ENCODE measurements at regions of chr22 and their contacts with region 1.

Region 1: GRCh38 chr22:17767233-17768065 is 6.8 kb downstream of the BID start:
- DNase-seq: peak; percentile 53
- H3K4me3 Mint-ChIP-seq: peak overlapping the region; percentile 44
- H3K27ac Mint-ChIP-seq: peak overlapping the region; percentile 74
- H3K4me1 Mint-ChIP-seq: peaks cover 42% of the 10 kb centered on the region
- H3K27me3 Mint-ChIP-seq: peaks cover 40% of the 10 kb centered on the region

Region 2: GRCh38 chr22:17734187-17734586 is 33.3 kb before region 1 on chr22:
- intact Hi-C with region 1: loop called (anchors 1 kb)
- DNase-seq: peak; percentile 16
- H3K4me3 Mint-ChIP-seq: no peak overlapping the region
- H3K27ac Mint-ChIP-seq: peak overlapping the region; percentile 67
- H3K4me1 Mint-ChIP-seq: peaks cover 17% of the 10 kb centered on the region
- H3K27me3 Mint-ChIP-seq: no peaks in the 10 kb centered on the region

Region 3: DNA sequence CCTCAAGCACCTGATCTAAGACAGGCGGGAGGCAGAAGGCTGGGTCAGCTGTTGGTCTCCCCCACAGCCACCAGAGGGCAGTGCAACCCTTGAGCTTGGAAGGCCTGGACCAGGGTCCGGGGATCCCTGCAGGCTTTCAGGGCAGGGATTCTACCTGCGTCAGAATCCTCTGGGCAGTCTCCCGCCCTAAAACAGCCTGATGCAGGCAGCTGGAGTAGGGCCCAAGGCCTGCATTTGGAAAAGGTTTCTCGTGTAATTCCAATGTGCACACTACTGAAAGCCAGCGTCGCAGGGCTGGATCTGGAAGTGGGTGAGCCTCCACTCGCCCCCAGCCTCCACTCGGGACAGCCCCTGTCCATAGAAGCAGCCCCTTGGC is 24.9 kb before region 1 on chr22:
- intact Hi-C with region 1: loop called (anchors 2 kb)
- DNase-seq: peak; percentile 38
- H3K4me3 Mint-ChIP-seq: no peak overlapping the region
- H3K27ac Mint-ChIP-seq: no peak overlapping the region
- H3K4me1 Mint-ChIP-seq: no peaks in the 10 kb centered on the region
- H3K27me3 Mint-ChIP-seq: no peaks in the 10 kb centered on the region

Region 4: DNA sequence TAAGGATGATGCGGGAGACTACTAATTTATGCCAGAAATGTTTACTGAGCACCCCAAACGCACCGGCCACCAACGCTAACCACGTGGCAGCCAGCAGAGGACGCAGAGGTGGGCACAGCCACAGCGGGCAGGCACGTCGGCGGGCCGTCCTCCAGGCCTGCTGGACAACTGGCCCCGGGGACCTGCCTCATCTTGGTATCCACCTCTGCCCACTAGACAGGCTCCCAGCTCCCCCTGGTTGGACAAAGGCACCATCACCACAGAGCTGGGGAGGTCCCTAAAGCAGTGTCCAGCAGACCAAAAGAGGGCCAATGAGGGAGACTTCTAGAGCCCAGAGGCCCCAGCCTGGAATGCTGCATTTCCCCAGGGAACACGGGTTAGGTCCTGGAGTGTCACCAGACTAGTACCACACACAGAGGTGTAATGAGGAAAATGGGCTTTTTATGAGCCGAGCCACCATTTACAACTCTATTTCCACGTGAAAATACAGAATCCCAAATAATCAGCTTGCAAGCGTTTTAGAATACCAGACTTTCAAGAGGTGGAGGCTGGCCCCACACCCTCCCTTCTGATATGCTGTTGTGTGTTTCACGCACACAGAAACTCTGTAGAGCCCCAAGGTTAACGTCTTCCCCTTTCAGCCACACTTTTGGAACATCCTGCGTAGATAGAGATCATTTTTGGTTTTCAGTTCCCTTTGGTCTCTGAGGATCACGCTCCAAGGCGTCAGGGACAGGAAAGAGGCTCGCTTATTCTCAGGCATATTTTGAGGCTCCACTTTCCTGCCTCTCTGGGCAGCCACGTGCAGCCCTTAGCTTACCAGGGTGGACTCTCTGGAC is 30.5 kb after region 1 on chr22:
- intact Hi-C with region 1: no loop called
- DNase-seq: no peak
- H3K4me3 Mint-ChIP-seq: no peak overlapping the region
- H3K27ac Mint-ChIP-seq: no peak overlapping the region
- H3K4me1 Mint-ChIP-seq: peaks cover 5% of the 10 kb centered on the region
- H3K27me3 Mint-ChIP-seq: peaks cover 2% of the 10 kb centered on the region